ENCODE measurements at regions of chr1 and their contacts with region 1.

Region 1: GRCh38 chr1:229558571-229559335 is at the start of gene ABCB10:
- DNase-seq: peak; percentile 97 to 98 (median 97)
- ATAC-seq: peak; percentile 94
- H3K4me3 ChIP-seq: peak within 1 kb of the TSS; percentile 80
- H3K4me1 ChIP-seq: peaks cover 12% of the 10 kb centered on the region
- CTCF ChIP-seq: peak; percentile 85
- total RNA-seq, gene ABCB10: 19.6 to 25.9 (median 22.3) TPM

Region 2: GRCh38 chr1:229619614-229620013 is 60.9 kb after region 1 on chr1:
- intact Hi-C with region 1: loop called (anchors 10 kb)
- DNase-seq: no peak
- ATAC-seq: no peak
- H3K4me3 ChIP-seq: no peak overlapping the region
- H3K4me1 ChIP-seq: peaks cover 9% of the 10 kb centered on the region
- CTCF ChIP-seq: no peak

Region 3: DNA sequence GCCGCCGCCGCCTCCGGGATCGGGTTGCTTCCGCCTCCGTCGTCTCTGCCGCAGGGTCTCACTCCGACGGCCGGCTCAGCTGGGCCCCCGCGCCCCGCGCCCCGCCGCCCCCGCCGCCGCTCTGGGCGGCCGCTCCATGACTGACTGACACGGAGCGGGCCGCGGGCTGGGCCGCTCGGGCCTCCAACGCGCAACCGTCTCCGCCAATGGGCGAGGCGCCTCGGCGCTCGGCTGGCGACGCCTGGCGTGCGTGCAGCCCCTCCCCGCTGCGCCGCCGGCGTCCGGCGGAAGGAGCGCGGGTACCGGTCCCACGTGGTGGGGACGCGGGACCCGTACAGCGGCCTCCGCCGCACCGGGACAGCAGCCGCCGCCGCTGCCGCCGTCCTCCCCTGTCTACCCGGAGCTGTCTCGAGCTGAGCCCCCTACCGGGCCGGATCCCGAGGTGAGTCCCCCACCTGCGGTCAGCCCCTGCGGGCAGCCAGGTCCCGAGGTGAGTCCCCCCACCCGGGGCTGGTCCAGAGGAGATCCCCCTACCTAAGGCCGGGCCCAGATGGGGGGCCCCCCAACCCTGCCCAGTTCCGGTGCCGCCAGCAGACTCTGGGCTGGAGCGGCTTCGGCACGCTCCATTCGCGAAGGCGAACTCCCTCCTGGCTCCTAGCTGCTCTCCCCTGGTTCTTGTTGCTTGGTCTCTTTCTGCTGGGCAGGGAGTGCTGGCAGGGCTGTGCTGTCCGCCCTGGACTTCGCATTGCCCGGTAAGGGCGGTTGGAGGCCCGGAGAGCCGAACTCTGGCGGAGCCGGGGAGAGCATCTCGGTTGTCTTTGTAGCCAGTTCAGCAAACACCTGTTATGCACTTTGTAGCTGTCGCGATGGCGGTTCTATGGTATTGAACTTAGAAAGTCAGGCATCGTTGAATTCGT is 67.4 kb after region 1 on chr1 and contains the starts of genes TAF5L and URB2:
- intact Hi-C with region 1: loop called in 1 of 2 experiments (anchors 10 kb)
- DNase-seq: peak; percentile 84 to 93 (median 92)
- ATAC-seq: peak; percentile 98
- H3K4me3 ChIP-seq: peak within 1 kb of the TSS; percentile 90
- H3K4me1 ChIP-seq: peaks cover 23% of the 10 kb centered on the region
- CTCF ChIP-seq: peak; percentile 8
- total RNA-seq, gene TAF5L: 21.1 to 25.1 (median 23.4) TPM
- total RNA-seq, gene URB2: 5.5 to 8.3 (median 6.7) TPM

Region 4: DNA sequence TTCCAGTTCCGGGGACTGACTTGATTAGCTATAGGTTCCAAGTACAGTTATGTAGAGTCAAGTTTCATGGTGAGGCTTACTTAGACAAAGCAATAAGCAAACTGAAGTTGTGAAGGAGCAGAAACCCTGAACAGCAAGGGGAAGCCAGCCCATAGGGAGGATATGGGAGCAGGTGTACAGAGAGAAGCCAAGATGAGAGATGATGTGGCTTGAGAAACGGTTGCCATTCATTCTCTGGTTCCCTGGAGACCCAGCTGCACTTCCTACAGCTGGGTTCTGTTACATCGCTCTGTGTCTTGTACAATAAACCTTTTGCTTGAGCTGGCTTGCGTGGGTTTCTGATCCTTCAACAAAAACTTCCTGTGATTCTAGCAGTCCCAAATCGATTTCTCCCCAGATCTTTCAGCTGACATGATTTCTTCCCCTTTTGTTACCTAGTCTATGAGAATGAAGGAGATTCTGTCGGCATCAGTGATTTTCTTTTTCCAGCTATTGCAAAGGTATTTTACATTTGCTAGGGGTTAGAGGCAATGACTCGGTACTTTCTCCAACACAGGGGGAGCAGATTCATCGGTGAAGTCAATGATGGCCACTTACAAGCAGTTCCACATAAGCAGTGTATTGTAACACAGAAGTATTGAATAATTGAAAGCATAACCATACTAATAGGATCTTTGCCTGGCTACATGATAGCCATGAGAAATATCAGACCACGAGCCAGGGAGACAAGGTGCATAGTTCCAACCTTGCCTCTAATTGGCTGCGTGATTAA is 134.6 kb after region 1 on chr1:
- intact Hi-C with region 1: no loop called
- DNase-seq: no peak
- ATAC-seq: no peak
- H3K4me3 ChIP-seq: no peak overlapping the region
- H3K4me1 ChIP-seq: no peaks in the 10 kb centered on the region
- CTCF ChIP-seq: no peak

Region 5: GRCh38 chr1:229863651-229864545 is 305.1 kb after region 1 on chr1:
- intact Hi-C with region 1: no loop called
- DNase-seq: peak in 1 of 3 donors; percentile 12
- ATAC-seq: peak; percentile 11
- H3K4me3 ChIP-seq: no peak overlapping the region
- H3K4me1 ChIP-seq: no peaks in the 10 kb centered on the region
- CTCF ChIP-seq: no peak

Region 6: GRCh38 chr1:229874609-229875008 is 315.9 kb after region 1 on chr1:
- intact Hi-C with region 1: no loop called
- DNase-seq: no peak
- ATAC-seq: no peak
- H3K4me3 ChIP-seq: no peak overlapping the region
- H3K4me1 ChIP-seq: no peaks in the 10 kb centered on the region
- CTCF ChIP-seq: no peak